HepG2 (cell line): ENCODE measurements at regions of chr12 and their contacts with region 1.

Region 1: GRCh38 chr12:54032627-54033100 is at the start of gene HOXC5:
- DNase-seq: peak; percentile 32
- ATAC-seq: peak; percentile 32; the same call in 2 of the 3 replicates
- H3K4me3 ChIP-seq: peak within 1 kb of the TSS in 1 of 3 experiments; percentile 32; a peak in 2 of 6 replicates
- H3K27ac ChIP-seq: no peak within 1 kb of the TSS
- H3K4me1 ChIP-seq: peaks cover 7% of the 10 kb centered on the region; the same call in 1 of the 2 replicates
- H3K27me3 ChIP-seq: peaks cover 5 to 69% of the 10 kb centered on the region in 2 experiments; a peak in 4 of 5 replicates
- CTCF ChIP-seq: peak; percentile 81
- EP300 ChIP-seq: no peak
- POLR2A ChIP-seq: no peak
- RAD21 ChIP-seq: peak; percentile 67; the same call in 1 of the 2 replicates
- total RNA-seq, gene HOXC5: not detected in 2 replicates

Region 2: DNA sequence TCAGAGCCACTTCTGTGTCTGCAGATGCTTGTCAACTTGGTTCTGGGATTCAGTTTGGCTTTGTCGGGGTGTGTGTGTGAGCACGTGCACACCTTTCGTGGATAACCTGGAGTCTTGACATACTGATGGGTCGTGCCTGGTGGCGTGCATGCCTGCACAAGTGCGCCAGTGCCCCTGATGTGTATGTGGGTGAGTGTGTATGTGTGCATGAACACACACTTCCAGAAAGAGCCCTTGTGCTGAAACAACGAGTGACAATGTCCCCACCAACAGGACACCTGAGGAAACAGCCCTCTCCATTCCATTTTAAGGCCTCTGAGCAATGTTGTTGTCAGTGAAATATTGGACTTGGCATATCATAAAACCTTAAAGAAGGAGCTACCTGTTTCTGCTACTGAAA is 102.2 kb after region 1 on chr12:
- CTCF ChIA-PET with region 1: no interaction called
- POLR2A ChIA-PET with region 1: no interaction called
- in situ Hi-C with region 1: loop called (anchors 5 kb)
- intact Hi-C with region 1: loop called (anchors 5 kb)
- DNase-seq: no peak
- ATAC-seq: peak; percentile 60
- H3K4me3 ChIP-seq: no peak overlapping the region
- H3K27ac ChIP-seq: no peak overlapping the region
- H3K4me1 ChIP-seq: peaks cover 81% of the 10 kb centered on the region
- H3K27me3 ChIP-seq: no peaks in the 10 kb centered on the region
- CTCF ChIP-seq: peak; percentile 60
- EP300 ChIP-seq: no peak
- POLR2A ChIP-seq: no peak
- RAD21 ChIP-seq: no peak

Region 3: GRCh38 chr12:54191550-54192022 is 158.9 kb after region 1 on chr12:
- CTCF ChIA-PET with region 1: interaction called, 29 read pairs
- POLR2A ChIA-PET with region 1: no interaction called
- in situ Hi-C with region 1: loop called (anchors 5 kb)
- intact Hi-C with region 1: loop called (anchors 1 kb)
- DNase-seq: peak; percentile 78
- ATAC-seq: peak; percentile 79
- H3K4me3 ChIP-seq: 0 out of 6 replicates have a peak overlapping the region, but pooled peaks of 1 of the 3 experiments have one; percentile 8
- H3K27ac ChIP-seq: no peak overlapping the region
- H3K4me1 ChIP-seq: peaks cover 38% of the 10 kb centered on the region
- H3K27me3 ChIP-seq: peaks cover 0 to 8% of the 10 kb centered on the region in 2 experiments; a peak in 1 of 5 replicates
- CTCF ChIP-seq: peak; percentile 89
- EP300 ChIP-seq: no peak
- POLR2A ChIP-seq: no peak
- RAD21 ChIP-seq: peak; percentile 72

Region 4: GRCh38 chr12:54201001-54201794 is 168.5 kb after region 1 on chr12:
- CTCF ChIA-PET with region 1: interaction called, 33 read pairs
- POLR2A ChIA-PET with region 1: no interaction called
- in situ Hi-C with region 1: no loop called
- intact Hi-C with region 1: no loop called
- DNase-seq: peak; percentile 51
- ATAC-seq: peak; percentile 96
- H3K4me3 ChIP-seq: no peak overlapping the region
- H3K27ac ChIP-seq: no peak overlapping the region
- H3K4me1 ChIP-seq: no peaks in the 10 kb centered on the region
- H3K27me3 ChIP-seq: peaks cover 4 to 61% of the 10 kb centered on the region in 2 experiments; a peak in 4 of 5 replicates
- CTCF ChIP-seq: peak; percentile 85
- EP300 ChIP-seq: no peak
- POLR2A ChIP-seq: no peak
- RAD21 ChIP-seq: peak; percentile 87

Region 5: GRCh38 chr12:54259194-54260011 is 226.7 kb after region 1 on chr12:
- CTCF ChIA-PET with region 1: no interaction called
- POLR2A ChIA-PET with region 1: no interaction called
- in situ Hi-C with region 1: no loop called
- intact Hi-C with region 1: no loop called
- DNase-seq: no peak
- ATAC-seq: no peak
- H3K4me3 ChIP-seq: no peak overlapping the region
- H3K27ac ChIP-seq: no peak overlapping the region
- H3K4me1 ChIP-seq: peaks cover 11% of the 10 kb centered on the region
- H3K27me3 ChIP-seq: no peaks in the 10 kb centered on the region
- CTCF ChIP-seq: no peak
- EP300 ChIP-seq: no peak
- POLR2A ChIP-seq: no peak
- RAD21 ChIP-seq: no peak